A673 (cell line): ENCODE measurements at regions of chr3 and their contacts with region 1.

Region 1: GRCh38 chr3:171772427-171773056 is 37.7 kb downstream of the PLD1 start:
- DNase-seq: peak; percentile 80
- H3K4me3 ChIP-seq: no peak overlapping the region
- H3K27ac ChIP-seq: no peak overlapping the region
- H3K4me1 ChIP-seq: peaks cover 23% of the 10 kb centered on the region
- H3K27me3 ChIP-seq: no peaks in the 10 kb centered on the region
- CTCF ChIP-seq: peak; percentile 80

Region 2: GRCh38 chr3:170961616-170962400 is 810.7 kb before region 1 on chr3:
- CTCF ChIA-PET with region 1: no interaction called
- POLR2A ChIA-PET with region 1: no interaction called
- intact Hi-C with region 1: loop called (anchors 5 kb)
- DNase-seq: peak; percentile 41
- H3K4me3 ChIP-seq: no peak overlapping the region
- H3K27ac ChIP-seq: no peak overlapping the region
- H3K4me1 ChIP-seq: no peaks in the 10 kb centered on the region
- H3K27me3 ChIP-seq: no peaks in the 10 kb centered on the region
- CTCF ChIP-seq: peak; percentile 70

Region 3: GRCh38 chr3:171614318-171614921 is 158.1 kb before region 1 on chr3:
- CTCF ChIA-PET with region 1: interaction called, 23 read pairs
- POLR2A ChIA-PET with region 1: no interaction called
- intact Hi-C with region 1: loop called (anchors 10 kb)
- DNase-seq: peak; percentile 75
- H3K4me3 ChIP-seq: no peak overlapping the region
- H3K27ac ChIP-seq: no peak overlapping the region
- H3K4me1 ChIP-seq: peaks cover 8% of the 10 kb centered on the region
- H3K27me3 ChIP-seq: no peaks in the 10 kb centered on the region
- CTCF ChIP-seq: peak; percentile 83

Region 4: GRCh38 chr3:171636666-171637065 is 135.9 kb before region 1 on chr3:
- CTCF ChIA-PET with region 1: no interaction called
- POLR2A ChIA-PET with region 1: no interaction called
- intact Hi-C with region 1: no loop called
- DNase-seq: no peak
- H3K4me3 ChIP-seq: no peak overlapping the region
- H3K27ac ChIP-seq: no peak overlapping the region
- H3K4me1 ChIP-seq: no peaks in the 10 kb centered on the region
- H3K27me3 ChIP-seq: no peaks in the 10 kb centered on the region
- CTCF ChIP-seq: no peak

Region 5: DNA sequence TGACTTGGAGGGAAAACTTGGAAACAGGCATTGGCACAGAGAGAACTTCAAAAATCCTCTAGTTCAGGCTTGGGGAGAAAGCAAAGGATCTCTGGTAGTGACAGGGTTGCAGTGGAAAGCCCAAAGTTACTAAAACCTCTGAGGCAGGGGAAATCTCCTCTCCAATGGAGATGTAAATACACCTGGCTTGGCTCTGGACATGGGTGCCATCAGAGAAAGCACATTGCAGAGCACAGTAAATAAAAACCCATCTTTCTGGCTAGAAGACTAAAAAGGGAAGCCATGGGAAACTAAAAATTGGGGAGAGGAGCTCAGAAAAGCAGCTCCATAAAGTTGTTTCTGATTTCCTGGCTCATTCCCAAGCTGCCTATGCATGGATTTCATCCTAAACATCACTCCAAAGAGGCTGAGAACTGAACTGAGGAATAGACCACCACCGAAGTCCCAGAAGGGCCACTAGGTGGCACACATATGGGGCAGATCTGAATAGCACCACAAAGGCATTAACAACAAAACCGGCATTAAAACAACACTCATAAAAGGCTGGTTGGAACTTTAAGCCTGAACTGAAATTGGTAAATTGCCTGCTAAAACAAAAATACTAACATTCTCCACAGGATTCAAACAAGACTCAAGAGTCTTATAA is 68.7 kb before region 1 on chr3:
- CTCF ChIA-PET with region 1: interaction called, 9 read pairs
- POLR2A ChIA-PET with region 1: no interaction called
- intact Hi-C with region 1: loop called (anchors 2 kb)
- DNase-seq: peak; percentile 77
- H3K4me3 ChIP-seq: no peak overlapping the region
- H3K27ac ChIP-seq: no peak overlapping the region
- H3K4me1 ChIP-seq: no peaks in the 10 kb centered on the region
- H3K27me3 ChIP-seq: no peaks in the 10 kb centered on the region
- CTCF ChIP-seq: peak; percentile 82

Region 6: DNA sequence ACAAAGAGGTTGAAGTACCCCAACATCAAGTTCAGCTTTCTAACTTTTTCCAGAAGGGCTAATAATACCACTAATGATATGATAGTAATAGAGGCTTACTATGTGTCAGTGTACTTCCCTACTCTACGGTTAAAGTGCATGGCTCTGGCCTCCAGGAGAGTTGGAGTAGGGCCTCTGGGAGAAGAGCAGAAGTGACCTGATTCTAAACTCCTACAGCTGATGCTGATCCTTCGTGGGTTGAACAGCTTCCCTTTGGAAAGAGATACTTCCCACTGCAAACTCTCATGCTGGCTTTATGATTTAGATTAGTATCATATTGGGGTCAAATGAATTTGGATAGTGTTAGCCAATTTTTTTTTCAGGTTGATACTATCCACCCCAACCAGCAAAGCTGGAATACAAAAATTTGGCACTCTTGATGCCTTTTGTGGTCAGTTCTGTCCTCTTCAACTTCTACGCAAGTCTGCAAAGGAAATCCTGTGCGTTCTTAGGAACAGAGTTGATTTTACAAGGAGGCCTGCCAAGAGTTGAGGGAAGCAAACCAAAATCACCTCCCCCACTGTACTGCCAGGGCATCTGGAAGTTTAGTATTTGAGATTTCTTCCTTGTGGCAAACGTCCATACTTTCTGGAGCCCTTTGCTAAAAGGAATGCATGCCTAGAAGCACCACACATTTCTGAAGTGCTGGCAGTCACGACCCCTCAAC is 88.4 kb after region 1 on chr3:
- CTCF ChIA-PET with region 1: no interaction called
- POLR2A ChIA-PET with region 1: no interaction called
- intact Hi-C with region 1: no loop called
- DNase-seq: no peak
- H3K4me3 ChIP-seq: no peak overlapping the region
- H3K27ac ChIP-seq: no peak overlapping the region
- H3K4me1 ChIP-seq: no peaks in the 10 kb centered on the region
- H3K27me3 ChIP-seq: no peaks in the 10 kb centered on the region
- CTCF ChIP-seq: no peak

Region 7: DNA sequence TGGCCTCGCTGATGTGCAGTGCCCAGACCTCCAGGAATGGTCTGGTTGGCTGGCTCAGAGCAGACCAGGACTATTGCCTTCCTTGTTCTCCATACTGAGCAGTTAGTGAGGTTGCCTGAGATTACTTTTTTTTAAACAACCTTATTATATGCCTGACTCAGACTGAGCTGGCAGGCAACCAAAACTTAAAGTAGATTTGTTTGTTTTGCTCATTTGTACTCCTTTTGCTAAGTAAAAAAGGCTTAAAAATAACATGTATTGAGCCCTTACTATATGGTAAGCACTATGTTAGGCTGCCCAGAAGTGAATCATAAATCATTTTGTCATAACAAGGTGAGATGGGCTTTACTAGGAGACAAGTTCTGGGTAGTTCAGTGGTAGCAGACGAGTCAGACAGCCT is 583.3 kb after region 1 on chr3:
- CTCF ChIA-PET with region 1: no interaction called
- POLR2A ChIA-PET with region 1: no interaction called
- intact Hi-C with region 1: loop called (anchors 10 kb)
- DNase-seq: peak; percentile 13
- H3K4me3 ChIP-seq: no peak overlapping the region
- H3K27ac ChIP-seq: no peak overlapping the region
- H3K4me1 ChIP-seq: no peaks in the 10 kb centered on the region
- H3K27me3 ChIP-seq: no peaks in the 10 kb centered on the region
- CTCF ChIP-seq: no peak